Activated CD8-positive, alpha-beta T cell treated with anti-CD3 and anti-CD28 coated beads, Interleukin-2, amount 10 ng/mL, durations not matched to agents 7 days and 5 days (primary cell): ENCODE measurements at regions of chr1 and their contacts with region 1.

Region 1: GRCh38 chr1:110872745-110873720 is at the start of gene CD53:
- DNase-seq: peak; percentile 79
- ATAC-seq: peak; percentile 38
- H3K4me3 Mint-ChIP-seq: peak within 1 kb of the TSS; percentile 97
- H3K27ac Mint-ChIP-seq: peak within 1 kb of the TSS; percentile 98
- H3K4me1 Mint-ChIP-seq: peaks cover 37% of the 10 kb centered on the region
- H3K27me3 Mint-ChIP-seq: no peaks in the 10 kb centered on the region
- total RNA-seq, gene CD53: 392 to 404 TPM

Region 2: DNA sequence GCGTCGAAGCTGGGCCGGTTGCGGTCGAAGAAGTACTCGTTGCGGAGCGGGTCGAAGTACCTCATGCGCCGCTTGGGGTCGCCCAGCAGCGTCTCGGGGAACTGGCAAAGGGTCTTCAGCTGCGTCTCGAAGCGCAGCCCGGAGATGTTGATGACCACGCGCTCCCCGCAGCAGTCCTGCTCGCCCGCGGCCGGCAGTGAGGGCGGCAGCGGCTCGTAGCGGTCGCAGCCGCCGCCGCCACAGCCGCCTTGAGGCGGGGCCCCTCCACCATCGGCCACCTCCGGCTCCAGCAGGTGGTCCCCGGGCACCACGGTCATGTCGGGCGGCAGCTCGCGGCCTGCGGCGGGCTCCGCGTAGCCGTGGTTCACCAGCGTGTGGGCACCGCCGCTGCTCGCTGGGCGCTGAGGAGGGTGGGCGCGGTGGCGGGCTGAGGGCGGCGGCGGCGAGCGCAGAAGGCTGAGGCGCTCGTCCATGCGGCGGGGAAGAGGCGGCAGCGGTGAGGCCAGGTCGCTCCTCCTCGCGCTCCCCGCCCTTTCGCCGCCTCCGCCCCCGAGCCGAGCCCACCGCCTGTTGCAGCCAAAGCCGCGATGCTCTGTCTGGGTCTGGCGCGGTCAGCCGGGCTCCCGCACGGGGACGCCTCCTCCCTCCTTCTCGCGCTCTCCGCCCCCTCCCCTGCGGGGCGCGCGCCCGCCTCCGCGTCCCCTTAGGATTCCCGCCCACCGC is 198.5 kb before region 1 on chr1 and contains the start of gene KCNA3:
- CTCF ChIA-PET with region 1: interaction called, 5 read pairs
- POLR2A ChIA-PET with region 1: interaction called, 47 read pairs
- DNase-seq: peak; percentile 77
- ATAC-seq: peak; percentile 43
- H3K4me3 Mint-ChIP-seq: peak within 1 kb of the TSS; percentile 95
- H3K27ac Mint-ChIP-seq: peak within 1 kb of the TSS; percentile 91
- H3K4me1 Mint-ChIP-seq: peaks cover 33% of the 10 kb centered on the region
- H3K27me3 Mint-ChIP-seq: no peaks in the 10 kb centered on the region
- total RNA-seq, gene KCNA3: 49.0 to 49.3 TPM

Region 3: GRCh38 chr1:110829955-110830553 is 43.0 kb before region 1 on chr1:
- CTCF ChIA-PET with region 1: interaction called, 15 read pairs
- POLR2A ChIA-PET with region 1: interaction called, 3 read pairs
- DNase-seq: peak; percentile 59
- ATAC-seq: peak; percentile 88
- H3K4me3 Mint-ChIP-seq: no peak overlapping the region
- H3K27ac Mint-ChIP-seq: no peak overlapping the region
- H3K4me1 Mint-ChIP-seq: peaks cover 8% of the 10 kb centered on the region
- H3K27me3 Mint-ChIP-seq: peaks cover 6% of the 10 kb centered on the region

Region 4: DNA sequence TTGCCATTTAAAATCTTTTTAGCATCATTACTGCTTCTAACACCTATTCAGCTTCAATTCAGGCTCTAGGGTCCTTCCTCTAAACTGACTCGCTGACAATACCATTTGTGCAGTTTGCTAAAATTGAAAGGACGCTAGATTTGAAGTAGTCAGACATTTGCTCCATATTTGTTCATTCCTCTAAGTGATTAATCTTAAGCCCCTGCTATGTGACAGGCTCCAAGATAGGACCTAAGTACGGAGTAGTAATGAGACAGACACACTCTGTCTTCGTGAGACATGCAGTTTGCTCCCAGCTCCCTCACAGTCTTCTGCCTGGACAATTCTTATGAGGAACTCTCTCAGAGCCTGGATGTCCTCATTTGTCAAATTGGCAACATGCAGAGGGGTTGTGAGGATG is 26.2 kb before region 1 on chr1:
- CTCF ChIA-PET with region 1: no interaction called
- POLR2A ChIA-PET with region 1: no interaction called
- DNase-seq: no peak
- ATAC-seq: no peak
- H3K4me3 Mint-ChIP-seq: no peak overlapping the region
- H3K27ac Mint-ChIP-seq: no peak overlapping the region
- H3K4me1 Mint-ChIP-seq: no peaks in the 10 kb centered on the region
- H3K27me3 Mint-ChIP-seq: no peaks in the 10 kb centered on the region

Region 5: DNA sequence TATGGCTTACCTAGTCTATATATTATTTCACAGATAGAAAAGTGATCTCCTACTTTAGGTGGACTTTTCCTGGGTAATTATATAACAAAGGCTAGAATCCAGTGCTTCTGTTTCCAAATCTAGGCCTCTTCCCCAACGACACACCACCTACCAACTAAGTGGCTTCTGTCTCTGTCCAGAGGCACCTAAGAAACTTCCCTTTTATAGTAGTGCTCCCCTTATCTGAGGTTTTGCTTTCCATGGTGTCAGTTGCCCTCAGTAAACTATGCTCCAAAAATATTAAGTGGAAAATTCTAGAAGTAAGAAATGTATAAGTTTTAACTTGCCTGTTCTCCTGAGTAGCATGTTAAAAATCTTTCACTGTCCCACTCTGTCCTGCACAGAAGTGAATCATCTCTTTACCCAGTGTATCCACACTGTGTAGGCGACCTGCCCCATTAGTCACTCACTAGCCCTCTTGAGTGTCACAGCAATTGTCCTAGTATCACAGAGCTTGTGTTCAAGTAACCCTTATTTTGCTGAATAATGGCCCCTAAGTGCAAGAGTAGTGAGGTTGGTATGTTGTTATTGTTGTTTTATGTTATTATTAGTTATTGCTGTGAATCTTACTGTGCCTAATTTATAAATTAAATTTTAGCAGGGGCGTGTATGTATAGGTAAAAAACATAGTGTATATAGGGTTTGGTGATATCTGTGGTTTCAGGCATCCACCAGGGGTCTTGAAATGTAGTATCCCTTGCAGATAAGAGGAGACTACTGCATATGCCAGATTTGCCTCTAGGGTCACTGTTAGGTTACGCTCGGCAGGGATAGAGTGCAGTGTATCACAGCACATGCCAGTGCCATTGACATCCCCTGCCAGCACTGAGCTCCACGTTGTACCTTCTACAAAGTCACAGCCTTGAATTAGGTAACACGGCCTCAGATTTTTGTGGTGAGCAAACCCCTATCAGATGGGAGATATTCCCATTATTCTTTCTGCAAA is 14.8 kb before region 1 on chr1:
- CTCF ChIA-PET with region 1: interaction called, 3 read pairs
- POLR2A ChIA-PET with region 1: interaction called, 12 read pairs
- DNase-seq: no peak
- ATAC-seq: no peak
- H3K4me3 Mint-ChIP-seq: no peak overlapping the region
- H3K27ac Mint-ChIP-seq: no peak overlapping the region
- H3K4me1 Mint-ChIP-seq: peaks cover 17% of the 10 kb centered on the region
- H3K27me3 Mint-ChIP-seq: peaks cover 2% of the 10 kb centered on the region

Region 6: DNA sequence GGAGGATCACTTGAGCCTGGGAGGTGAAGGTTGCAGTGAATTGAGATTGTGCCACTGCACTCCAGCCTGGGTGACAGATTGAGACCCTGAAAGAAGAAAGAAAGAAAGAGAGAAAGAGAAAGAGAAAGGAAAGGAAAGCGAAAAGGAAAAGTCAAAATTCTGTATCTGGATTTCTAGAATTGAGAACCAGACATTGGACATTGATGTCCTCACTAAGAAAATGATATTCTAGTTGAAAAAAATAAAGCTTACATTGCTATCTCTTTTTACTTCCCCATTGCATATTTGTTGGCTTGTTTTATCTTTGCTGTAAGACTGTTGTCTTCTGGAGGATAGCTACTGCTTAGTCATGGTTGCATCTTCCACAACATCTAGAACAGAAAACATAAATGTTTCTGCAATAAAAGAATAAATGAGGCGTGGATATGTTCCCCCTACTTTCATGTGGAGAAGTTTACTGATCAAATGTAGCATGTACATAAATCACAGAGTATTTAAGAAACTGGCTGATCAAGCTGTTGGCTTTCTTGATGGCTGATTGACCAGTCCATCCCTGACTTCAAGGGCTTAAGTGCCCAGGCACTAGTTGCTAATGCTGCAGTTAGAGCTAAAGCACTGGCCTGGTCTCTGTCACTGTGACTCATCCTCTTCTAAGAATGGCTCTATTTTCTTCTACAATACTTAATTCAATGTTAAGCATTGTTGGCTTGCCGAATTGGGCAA is 17.6 kb after region 1 on chr1:
- CTCF ChIA-PET with region 1: interaction called, 6 read pairs
- POLR2A ChIA-PET with region 1: interaction called, 65 read pairs
- DNase-seq: no peak
- ATAC-seq: no peak
- H3K4me3 Mint-ChIP-seq: no peak overlapping the region
- H3K27ac Mint-ChIP-seq: peak overlapping the region; percentile 74
- H3K4me1 Mint-ChIP-seq: peaks cover 86% of the 10 kb centered on the region
- H3K27me3 Mint-ChIP-seq: no peaks in the 10 kb centered on the region

Region 7: DNA sequence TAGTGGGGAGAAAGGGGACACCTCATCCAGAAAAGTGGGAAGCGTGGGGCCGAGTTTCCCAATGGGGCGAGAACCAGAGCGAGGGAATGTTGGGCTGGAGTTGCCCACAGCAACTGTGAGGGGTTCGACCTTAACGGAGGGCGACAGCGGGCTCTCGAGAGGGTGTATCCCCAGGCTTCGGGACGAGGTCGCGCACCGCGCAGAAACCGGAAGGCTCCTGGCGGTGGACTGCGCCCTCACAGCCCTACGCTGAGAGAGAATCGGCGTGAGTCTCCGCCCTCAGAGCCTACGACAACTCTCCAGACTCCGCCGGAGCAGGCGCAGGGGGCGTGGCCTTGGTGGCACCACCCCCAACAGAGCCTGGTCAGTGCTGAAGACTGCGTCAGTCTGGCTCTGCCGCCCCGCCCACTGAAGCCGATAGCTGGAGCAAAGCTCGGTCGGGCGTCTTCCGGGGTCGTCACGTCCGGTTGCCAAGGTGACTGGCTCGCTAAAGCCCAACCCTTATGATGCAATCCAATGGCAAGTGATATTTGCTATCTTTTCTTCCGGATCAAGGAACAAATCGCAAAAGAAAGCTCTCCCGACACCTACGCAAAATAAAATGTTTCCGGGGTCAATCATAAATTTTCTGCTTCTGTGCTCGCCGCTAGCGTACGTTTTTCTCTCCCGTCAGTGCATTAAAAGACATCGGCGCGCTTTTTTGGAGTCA is 90.8 kb after region 1 on chr1 and contains the start of gene LRIF1:
- CTCF ChIA-PET with region 1: interaction called, 9 read pairs
- POLR2A ChIA-PET with region 1: interaction called, 22 read pairs
- DNase-seq: peak; percentile 100
- ATAC-seq: peak; percentile 99
- H3K4me3 Mint-ChIP-seq: peak within 1 kb of the TSS; percentile 78
- H3K27ac Mint-ChIP-seq: peak within 1 kb of the TSS; percentile 99
- H3K4me1 Mint-ChIP-seq: peaks cover 39% of the 10 kb centered on the region
- H3K27me3 Mint-ChIP-seq: peaks cover 8% of the 10 kb centered on the region
- total RNA-seq, gene LRIF1: 19.6 to 20.9 TPM

Region 8: DNA sequence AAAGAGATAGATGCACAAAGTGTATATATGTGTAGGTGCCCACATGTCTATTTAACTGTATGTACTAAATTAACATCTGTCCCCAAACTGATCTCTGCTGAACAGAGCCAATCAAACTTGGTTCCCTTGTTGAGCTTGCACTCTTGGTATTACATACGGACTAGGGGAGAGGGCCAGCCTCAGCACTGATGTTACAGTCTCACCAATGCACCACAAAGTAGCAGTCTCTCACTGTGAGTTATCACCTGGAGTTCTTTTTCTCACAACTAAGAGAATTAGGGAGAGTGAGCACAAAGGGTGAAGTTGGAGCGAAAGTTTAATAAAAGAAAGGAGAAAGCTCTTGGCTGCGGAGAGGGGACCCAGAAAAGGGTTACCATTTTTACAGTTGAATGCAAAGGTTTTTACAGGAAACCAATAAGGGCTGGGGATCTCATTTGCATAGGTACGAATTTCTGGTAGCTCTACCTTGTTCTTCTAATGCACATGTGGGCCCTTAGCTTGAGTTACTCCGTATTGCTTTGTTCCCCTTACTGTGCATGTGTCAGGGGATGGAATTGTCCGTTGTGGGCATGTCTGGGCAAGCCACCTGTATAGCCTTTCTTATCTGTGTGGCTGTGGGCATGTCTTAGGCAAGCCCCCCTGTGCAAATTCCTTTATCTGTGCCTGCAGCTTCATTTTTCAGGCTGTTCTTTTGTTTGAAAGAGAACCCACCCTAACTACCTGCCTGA is 341.2 kb after region 1 on chr1:
- CTCF ChIA-PET with region 1: no interaction called
- POLR2A ChIA-PET with region 1: interaction called, 12 read pairs
- DNase-seq: no peak
- ATAC-seq: no peak
- H3K4me3 Mint-ChIP-seq: peak overlapping the region; percentile 76
- H3K27ac Mint-ChIP-seq: peak overlapping the region; percentile 91
- H3K4me1 Mint-ChIP-seq: peaks cover 83% of the 10 kb centered on the region
- H3K27me3 Mint-ChIP-seq: no peaks in the 10 kb centered on the region

Region 9: DNA sequence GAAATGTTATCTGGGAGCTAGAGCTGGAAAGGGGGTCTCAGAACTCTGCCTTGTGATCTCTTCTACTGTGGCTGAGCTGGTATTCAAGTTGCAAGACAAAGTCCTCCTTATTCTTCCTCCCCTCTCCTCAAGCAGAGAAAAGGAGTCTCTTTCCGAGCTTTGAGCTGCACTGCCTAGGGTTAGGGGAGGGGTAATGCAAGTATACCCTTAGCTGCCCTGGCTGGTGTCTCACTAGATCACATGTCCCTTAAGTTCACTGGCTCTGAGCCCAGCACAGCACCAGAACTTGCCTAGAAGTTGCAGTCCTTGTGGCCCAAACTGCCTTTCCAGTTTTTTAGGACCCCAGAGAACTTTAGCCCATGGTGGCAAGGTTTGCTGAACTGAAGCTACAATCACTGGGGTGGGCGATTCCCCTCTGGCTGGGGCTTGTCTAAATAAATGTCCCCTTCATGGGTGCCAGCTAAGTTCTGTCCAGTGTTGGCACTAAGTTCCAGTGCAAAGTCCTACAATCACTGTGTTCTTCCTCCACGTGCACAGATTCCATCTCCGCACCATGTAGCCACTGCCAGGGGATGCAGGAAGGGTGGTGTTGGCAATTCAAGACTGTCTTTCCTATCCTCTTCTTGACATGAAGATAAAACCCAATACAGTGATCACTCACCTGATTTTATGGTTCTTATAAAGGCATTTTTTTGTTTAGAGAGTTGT is 394.9 kb after region 1 on chr1:
- CTCF ChIA-PET with region 1: no interaction called
- POLR2A ChIA-PET with region 1: no interaction called
- DNase-seq: no peak
- ATAC-seq: no peak
- H3K4me3 Mint-ChIP-seq: no peak overlapping the region
- H3K27ac Mint-ChIP-seq: no peak overlapping the region
- H3K4me1 Mint-ChIP-seq: peaks cover 6% of the 10 kb centered on the region
- H3K27me3 Mint-ChIP-seq: peaks cover 43% of the 10 kb centered on the region